Activated CD4-positive, alpha-beta T cell treated with anti-CD3 and anti-CD28 coated beads, Interleukin-2, amount 10 ng/mL, durations not matched to agents 7 days and 5 days (primary cell): ENCODE measurements at regions of chr19 and their contacts with region 1.

Region 1: GRCh38 chr19:10259162-10259905 is 7.3 kb downstream of the MRPL4 start:
- DNase-seq: peak; percentile 95
- H3K4me3 Mint-ChIP-seq: no peak overlapping the region
- H3K27ac Mint-ChIP-seq: peak overlapping the region; percentile 64
- H3K4me1 Mint-ChIP-seq: peaks cover 23% of the 10 kb centered on the region
- H3K27me3 Mint-ChIP-seq: no peaks in the 10 kb centered on the region

Region 2: DNA sequence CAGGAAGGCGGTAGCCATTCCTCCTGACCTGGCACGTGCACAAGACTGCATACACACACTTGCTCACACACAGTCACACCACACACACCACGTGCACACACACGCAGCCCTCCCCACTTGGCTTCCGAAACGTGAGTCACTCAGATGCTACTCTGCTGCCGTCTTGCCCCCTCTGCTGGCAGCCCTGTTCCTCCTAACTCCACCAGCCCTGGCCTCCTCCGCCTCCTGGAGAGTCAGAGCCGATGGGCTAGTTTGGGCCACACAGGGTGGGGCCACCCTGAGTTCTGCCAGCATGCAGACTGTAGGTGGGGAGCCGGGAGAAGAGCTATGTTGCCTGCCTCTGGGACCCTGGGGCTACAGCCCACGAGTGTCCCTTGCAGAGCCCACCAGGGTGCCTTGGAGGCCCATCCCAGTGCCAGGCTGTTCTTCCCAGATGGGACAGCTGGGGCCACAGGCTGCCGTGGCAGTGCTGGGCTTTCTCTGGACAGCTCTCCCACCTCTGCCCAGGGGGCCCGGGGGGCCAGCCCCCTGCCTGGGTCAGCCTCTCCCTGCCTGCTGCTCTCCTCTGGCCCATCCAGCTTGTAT is 412.2 kb before region 1 on chr19:
- CTCF ChIA-PET with region 1: no interaction called
- POLR2A ChIA-PET with region 1: no interaction called
- DNase-seq: peak; percentile 56
- H3K4me3 Mint-ChIP-seq: no peak overlapping the region
- H3K27ac Mint-ChIP-seq: peak overlapping the region; percentile 78
- H3K4me1 Mint-ChIP-seq: peaks cover 20% of the 10 kb centered on the region
- H3K27me3 Mint-ChIP-seq: no peaks in the 10 kb centered on the region

Region 3: DNA sequence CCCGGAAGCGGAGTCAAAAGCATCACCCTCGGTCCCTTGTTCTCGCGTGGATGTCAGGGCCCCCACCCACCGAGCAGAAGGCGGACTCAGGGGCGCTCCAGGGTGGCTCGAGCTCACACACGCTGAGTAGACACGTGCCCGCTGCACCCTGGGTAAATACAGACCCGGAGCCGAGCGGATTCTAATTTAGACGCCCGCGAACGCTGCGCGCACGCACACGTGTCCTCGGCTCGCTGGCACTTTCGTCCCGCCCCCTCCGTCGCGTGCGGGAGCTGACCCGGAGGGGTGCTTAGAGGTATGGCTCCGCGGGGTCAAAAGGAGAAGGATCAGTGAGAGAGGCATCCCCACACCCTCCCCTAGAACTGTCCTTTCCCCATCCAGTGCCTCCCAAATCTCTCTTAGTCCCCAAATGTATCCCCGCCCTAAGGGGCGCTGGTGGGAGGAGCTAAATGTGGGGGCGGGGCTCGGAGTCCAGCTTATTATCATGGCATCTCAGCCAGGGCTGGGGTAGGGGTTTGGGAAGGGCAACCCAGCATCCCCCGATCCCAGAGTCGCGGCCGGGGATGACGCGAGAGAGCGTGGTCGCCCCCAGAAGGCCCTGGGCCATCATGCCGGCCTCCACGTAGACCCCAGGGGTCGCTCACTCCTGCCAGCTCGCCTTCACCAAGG is 30.0 kb after region 1 on chr19:
- CTCF ChIA-PET with region 1: interaction called, 17 read pairs
- POLR2A ChIA-PET with region 1: no interaction called
- DNase-seq: peak; percentile 57
- H3K4me3 Mint-ChIP-seq: peak overlapping the region; percentile 52
- H3K27ac Mint-ChIP-seq: peak overlapping the region; percentile 9
- H3K4me1 Mint-ChIP-seq: peaks cover 78% of the 10 kb centered on the region
- H3K27me3 Mint-ChIP-seq: peaks cover 65% of the 10 kb centered on the region

Region 4: DNA sequence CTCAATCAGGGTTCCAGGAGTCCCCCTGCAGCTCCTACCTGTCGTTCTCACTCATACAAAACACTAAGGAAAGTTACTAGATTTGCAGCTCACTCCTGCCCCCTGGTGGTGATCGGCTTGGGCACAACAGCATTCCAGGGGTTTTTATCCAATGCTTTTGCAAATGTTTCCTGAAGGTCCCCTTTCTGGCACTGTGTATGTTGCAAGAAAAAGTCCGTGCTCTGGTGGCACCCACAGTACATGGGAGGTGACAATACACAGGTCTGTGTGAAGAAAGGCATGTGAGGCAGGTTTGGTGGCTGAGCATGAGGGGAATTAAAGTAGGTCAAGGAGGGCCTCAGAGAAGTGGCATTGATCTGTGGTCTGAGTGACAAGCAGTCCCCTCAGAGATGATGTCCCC is 129.6 kb after region 1 on chr19:
- CTCF ChIA-PET with region 1: interaction called, 148 read pairs
- POLR2A ChIA-PET with region 1: interaction called, 3 read pairs
- DNase-seq: peak; percentile 80
- H3K4me3 Mint-ChIP-seq: no peak overlapping the region
- H3K27ac Mint-ChIP-seq: no peak overlapping the region
- H3K4me1 Mint-ChIP-seq: peaks cover 3% of the 10 kb centered on the region
- H3K27me3 Mint-ChIP-seq: no peaks in the 10 kb centered on the region

Region 5: GRCh38 chr19:10403137-10404021 is 144.0 kb after region 1 on chr19 and contains the start of gene CDC37:
- CTCF ChIA-PET with region 1: interaction called, 23 read pairs
- POLR2A ChIA-PET with region 1: no interaction called
- DNase-seq: peak; percentile 97
- H3K4me3 Mint-ChIP-seq: peak within 1 kb of the TSS; percentile 97
- H3K27ac Mint-ChIP-seq: peak within 1 kb of the TSS; percentile 92
- H3K4me1 Mint-ChIP-seq: peaks cover 69% of the 10 kb centered on the region
- H3K27me3 Mint-ChIP-seq: no peaks in the 10 kb centered on the region
- total RNA-seq, gene CDC37: 200 to 205 TPM